Activated T-helper 2 cell treated with anti-CD3 and anti-CD28 coated beads, Interferon-gamma antibody, Interleukin-2, Interleukin-4, amounts not matched to agents 10 μg/mL and 5 μg/mL and 100 μg/mL, durations not matched to agents 14 hours and 24 hours and 36 hours (primary cell): ENCODE measurements at regions of chr10 and their contacts with region 1.

Region 1: DNA sequence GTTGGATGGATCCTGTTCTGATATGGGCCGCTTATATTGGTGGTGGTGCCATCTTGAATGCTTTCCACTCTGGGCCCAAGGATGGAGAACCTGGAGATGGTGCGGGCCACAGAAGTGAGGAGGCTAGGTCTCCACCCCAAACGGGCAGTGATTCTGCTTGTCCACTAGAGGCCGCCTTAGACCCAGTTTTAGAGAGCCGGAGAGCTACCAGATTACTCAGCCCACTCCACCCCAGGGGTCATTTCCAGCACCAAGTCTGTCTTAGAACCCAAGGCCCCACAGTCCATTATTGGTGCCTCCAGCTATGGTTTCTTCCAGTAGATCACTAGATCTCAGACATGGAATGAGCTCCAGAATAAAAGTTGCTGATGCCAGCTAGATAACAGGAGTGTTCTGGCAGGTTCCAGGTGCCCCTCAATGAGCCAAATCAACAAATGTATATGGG is 11.8 kb upstream of the CAMK2G start:
- DNase-seq: peak; percentile 56
- H3K4me3 Mint-ChIP-seq: no peak overlapping the region
- H3K27ac Mint-ChIP-seq: no peak overlapping the region
- H3K4me1 Mint-ChIP-seq: peaks cover 8% of the 10 kb centered on the region
- H3K27me3 Mint-ChIP-seq: no peaks in the 10 kb centered on the region

Region 2: DNA sequence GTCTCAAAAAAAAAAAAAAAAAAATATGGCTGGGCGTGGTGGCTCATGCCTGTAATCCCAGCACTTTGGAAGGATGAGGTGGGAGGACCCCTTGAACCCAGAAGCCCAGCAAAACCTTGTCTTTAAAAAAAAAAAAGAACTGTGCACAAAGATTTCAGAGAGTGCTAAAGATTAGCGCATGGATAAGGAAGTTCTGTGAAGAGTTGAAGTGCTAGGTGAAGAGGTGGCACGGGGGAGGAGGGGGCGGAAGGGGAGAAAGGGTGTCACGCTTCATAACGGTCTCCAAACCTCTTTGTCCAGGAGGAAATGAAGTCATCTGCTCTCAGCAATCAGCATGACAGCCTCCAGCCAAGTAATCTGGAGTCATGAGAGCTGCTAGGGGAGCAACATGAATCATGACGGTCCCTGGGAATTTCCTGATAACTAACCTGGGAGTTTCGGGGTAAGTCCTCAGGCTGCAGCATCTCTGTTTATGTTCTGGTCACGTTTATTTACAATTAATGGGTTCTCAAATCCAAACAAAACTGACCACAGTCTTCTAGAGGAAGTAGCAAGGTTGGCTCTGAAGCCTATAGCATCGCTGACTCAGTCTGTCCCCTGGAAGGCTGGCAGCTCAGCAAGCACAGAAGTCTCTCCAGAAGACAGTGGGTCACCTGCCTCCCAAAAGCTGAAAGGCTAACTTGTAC is 22.9 kb after region 1 on chr10:
- intact Hi-C with region 1: loop called (anchors 2 kb)
- DNase-seq: peak; percentile 53
- H3K4me3 Mint-ChIP-seq: peak overlapping the region; percentile 58
- H3K27ac Mint-ChIP-seq: peak overlapping the region; percentile 73
- H3K4me1 Mint-ChIP-seq: peaks cover 40% of the 10 kb centered on the region
- H3K27me3 Mint-ChIP-seq: peaks cover 5% of the 10 kb centered on the region

Region 3: DNA sequence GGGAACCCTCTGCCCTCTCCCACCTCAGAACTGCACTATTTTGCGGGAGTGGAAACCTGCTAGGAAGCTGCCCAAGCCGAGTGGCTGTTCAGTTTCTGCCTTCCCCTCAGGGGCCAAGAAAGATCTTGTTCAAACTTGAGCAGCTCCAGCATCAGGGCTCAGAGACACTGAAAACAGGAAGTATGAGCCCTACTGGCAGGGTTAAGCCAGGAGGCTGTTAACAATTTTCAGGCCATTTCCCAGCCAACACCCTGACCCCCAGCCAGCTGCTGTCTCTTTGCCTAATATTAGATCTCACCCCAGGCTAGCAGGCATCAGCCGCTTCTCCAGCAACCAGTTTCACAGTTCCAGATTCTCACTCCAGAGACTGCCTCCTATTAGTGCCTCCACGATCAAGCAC is 34.0 kb after region 1 on chr10:
- intact Hi-C with region 1: loop called (anchors 5 kb)
- DNase-seq: no peak
- H3K4me3 Mint-ChIP-seq: no peak overlapping the region
- H3K27ac Mint-ChIP-seq: no peak overlapping the region
- H3K4me1 Mint-ChIP-seq: peaks cover 31% of the 10 kb centered on the region
- H3K27me3 Mint-ChIP-seq: peaks cover 14% of the 10 kb centered on the region

Region 4: DNA sequence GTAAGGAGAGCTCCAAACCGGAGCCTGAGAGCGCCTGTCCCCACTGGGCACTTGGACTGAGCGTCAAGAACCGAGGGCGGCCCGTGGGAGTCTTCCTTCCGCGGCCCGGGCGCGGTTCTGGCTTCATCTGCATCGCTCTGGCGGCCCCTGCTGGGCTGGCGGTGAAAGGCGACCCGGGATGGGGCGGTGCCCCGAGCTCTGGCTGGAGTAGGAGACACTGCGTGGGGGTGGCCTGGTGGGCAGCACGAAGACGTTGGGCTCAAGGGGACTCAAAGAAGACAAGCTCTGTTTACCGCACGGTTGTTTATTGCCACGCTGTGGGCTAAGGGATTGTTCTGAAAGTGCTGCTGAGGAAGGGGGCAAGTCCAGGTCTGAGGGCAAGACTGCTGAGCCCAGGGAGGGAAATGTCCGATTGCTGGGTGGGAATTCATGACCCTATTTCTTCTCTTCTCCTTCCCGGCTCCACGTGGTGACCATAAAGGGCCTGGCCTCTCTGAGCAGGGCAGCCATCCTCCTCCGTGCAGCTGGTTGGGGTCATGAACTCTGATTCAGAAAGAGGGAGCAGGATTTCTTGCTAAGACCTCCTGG is 54.6 kb after region 1 on chr10:
- intact Hi-C with region 1: loop called (anchors 1 kb)
- DNase-seq: peak; percentile 80
- H3K4me3 Mint-ChIP-seq: no peak overlapping the region
- H3K27ac Mint-ChIP-seq: no peak overlapping the region
- H3K4me1 Mint-ChIP-seq: peaks cover 10% of the 10 kb centered on the region
- H3K27me3 Mint-ChIP-seq: peaks cover 6% of the 10 kb centered on the region

Region 5: DNA sequence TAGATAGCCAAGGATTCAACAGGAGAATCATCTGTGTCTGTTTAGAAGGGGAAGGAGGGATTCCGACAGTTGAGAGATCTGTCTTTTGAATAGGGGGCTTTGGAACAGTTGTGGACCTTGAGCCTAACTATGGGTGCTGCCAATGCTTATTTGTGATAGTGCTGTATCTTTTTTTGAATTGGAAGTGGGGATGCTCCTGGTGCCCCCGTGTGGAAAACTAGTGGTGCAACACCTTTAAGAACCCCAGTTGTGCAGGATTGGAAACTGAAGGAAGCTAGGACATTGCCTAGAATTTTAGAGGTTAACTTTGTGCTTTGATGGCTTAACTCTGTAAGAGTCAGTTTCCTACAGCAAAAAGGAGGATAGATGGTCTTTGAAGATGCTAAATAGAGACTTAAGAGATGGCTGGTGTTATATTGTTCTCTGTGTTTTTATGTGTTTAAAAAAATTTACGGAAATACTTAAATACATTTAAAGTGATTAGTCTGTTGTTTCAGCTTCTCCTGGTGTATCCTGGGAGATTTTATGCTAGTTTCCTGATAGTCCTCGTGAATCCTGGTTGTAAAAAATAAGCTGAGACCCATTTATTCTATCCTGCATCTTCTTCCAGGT is 195.2 kb after region 1 on chr10:
- intact Hi-C with region 1: loop called (anchors 1 kb)
- DNase-seq: no peak
- H3K4me3 Mint-ChIP-seq: no peak overlapping the region
- H3K27ac Mint-ChIP-seq: no peak overlapping the region
- H3K4me1 Mint-ChIP-seq: peaks cover 48% of the 10 kb centered on the region
- H3K27me3 Mint-ChIP-seq: no peaks in the 10 kb centered on the region

Region 6: DNA sequence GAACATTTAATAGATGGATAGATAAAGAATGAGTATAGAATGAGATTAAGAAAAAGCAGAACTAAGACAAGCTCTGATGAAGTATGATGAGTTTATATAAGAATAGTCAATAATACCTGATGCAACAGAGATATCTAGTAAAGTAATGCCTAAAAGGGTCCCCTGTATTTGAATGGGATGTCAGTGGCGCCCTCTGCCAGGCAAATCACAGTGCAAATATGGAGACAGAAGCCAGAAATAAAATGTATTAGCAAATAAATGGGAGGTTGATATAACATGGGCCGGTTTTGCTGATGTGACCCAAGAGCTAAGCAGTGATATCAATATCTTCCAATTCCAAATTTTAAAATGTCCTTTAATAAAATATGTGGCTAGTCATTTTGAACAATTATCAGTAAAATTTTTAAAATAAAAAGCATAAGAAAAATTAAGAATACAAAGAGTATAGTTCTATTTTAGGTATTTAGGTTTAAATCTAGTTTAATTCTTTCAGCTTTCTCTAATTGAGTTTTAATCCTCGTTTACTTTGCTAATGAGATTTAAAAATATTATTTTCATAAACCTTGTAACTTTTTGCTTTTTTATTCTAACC is 327.6 kb after region 1 on chr10:
- intact Hi-C with region 1: no loop called
- DNase-seq: no peak
- H3K4me3 Mint-ChIP-seq: no peak overlapping the region
- H3K27ac Mint-ChIP-seq: no peak overlapping the region
- H3K4me1 Mint-ChIP-seq: peaks cover 4% of the 10 kb centered on the region
- H3K27me3 Mint-ChIP-seq: no peaks in the 10 kb centered on the region